ENCODE measurements at regions of chr4 and their contacts with region 1.

Region 1: GRCh38 chr4:53688186-53688790 is 97.0 kb upstream of the LNX1 start:
- DNase-seq: peak in 1 of 2 donors; percentile 84
- ATAC-seq: peak; percentile 46
- H3K4me3 ChIP-seq: no peak overlapping the region
- H3K27ac ChIP-seq: peak overlapping the region in 1 of 2 donors; percentile 4
- H3K4me1 ChIP-seq: peaks cover 0 to 2% of the 10 kb centered on the region in 2 donors
- H3K27me3 ChIP-seq: no peaks in the 10 kb centered on the region

Region 2: GRCh38 chr4:53592686-53593501 is 95.4 kb before region 1 on chr4:
- intact Hi-C with region 1: loop called in 1 of 2 experiments (anchors 10 kb)
- DNase-seq: peak; percentile 65 to 78
- ATAC-seq: peak; percentile 65
- H3K4me3 ChIP-seq: peak overlapping the region in 1 of 2 donors; percentile 22
- H3K27ac ChIP-seq: no peak overlapping the region
- H3K4me1 ChIP-seq: no peaks in the 10 kb centered on the region
- H3K27me3 ChIP-seq: no peaks in the 10 kb centered on the region